Psoas muscle (tissue), 8 donors: ENCODE measurements at regions of chr2 and their contacts with region 1.

Region 1: GRCh38 chr2:235017441-235017840 is 65.6 kb downstream of the SH3BP4 start:
- DNase-seq: no peak
- ATAC-seq: no peak
- H3K4me3 ChIP-seq: no peak overlapping the region
- H3K27ac ChIP-seq: no peak overlapping the region
- H3K4me1 ChIP-seq: peaks cover 4% of the 10 kb centered on the region
- H3K27me3 ChIP-seq: no peaks in the 10 kb centered on the region
- CTCF ChIP-seq: no peak

Region 2: GRCh38 chr2:236265675-236266074 is 1248.2 kb after region 1 on chr2:
- intact Hi-C with region 1: loop called in 1 of 2 experiments (anchors 5 kb)
- DNase-seq: peak; percentile 48 to 81
- ATAC-seq: peak; percentile 67 to 79 (median 76)
- H3K4me3 ChIP-seq: no peak overlapping the region
- H3K27ac ChIP-seq: peak overlapping the region; percentile 86
- H3K4me1 ChIP-seq: peaks cover 47% of the 10 kb centered on the region
- H3K27me3 ChIP-seq: no peaks in the 10 kb centered on the region
- CTCF ChIP-seq: no peak